CD8-positive, alpha-beta T cell (primary cell): ENCODE measurements at regions of chr12 and their contacts with region 1.

Region 1: DNA sequence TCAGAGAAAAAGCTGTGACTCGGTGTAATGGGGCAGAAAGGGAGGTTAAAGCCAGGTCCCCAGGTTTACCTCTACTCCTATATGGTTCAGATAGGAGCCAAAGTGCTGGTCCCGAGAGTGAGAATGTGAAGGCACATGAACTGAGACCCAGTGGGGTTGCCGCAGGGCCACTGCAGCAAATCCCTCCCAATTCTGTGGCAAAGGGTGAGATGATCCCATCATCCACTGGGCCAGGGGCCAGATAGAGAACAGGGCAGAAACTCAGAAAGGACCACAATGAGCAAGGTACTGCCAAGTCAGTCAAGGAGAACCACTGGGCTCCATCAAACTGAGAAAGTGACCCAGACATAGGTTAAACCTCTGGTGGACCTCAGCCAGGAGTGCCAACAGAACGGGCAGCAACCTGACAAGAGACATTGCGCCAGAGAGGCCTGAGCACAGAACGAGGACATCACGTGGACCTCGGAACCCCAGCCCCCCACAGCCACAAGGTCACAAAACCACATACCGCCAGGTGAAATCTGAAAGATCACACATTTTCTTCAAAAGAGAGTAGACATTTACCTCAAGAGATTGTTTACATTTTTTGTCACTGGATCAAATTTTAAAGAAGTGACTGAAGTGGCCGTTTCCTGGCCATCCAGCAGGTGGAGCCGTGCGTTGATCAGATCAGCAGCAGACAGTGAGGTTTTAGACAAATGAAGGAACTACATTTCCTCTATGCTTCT is 20.5 kb upstream of the ITPR2 start:
- DNase-seq: peak; percentile 55 to 83 (median 69)
- ATAC-seq: peak; percentile 98
- H3K4me3 ChIP-seq: no peak overlapping the region
- H3K4me3 Mint-ChIP-seq: no peak overlapping the region
- H3K27ac ChIP-seq: no peak overlapping the region
- H3K27ac Mint-ChIP-seq: peak overlapping the region; percentile 33
- H3K4me1 ChIP-seq: peaks cover 6% of the 10 kb centered on the region
- H3K4me1 Mint-ChIP-seq: no peaks in the 10 kb centered on the region
- H3K27me3 ChIP-seq: no peaks in the 10 kb centered on the region
- H3K27me3 Mint-ChIP-seq: peaks cover 4% of the 10 kb centered on the region
- CTCF ChIP-seq: peak; percentile 92

Region 2: GRCh38 chr12:27142101-27142721 is 288.7 kb after region 1 on chr12:
- CTCF ChIA-PET with region 1: interaction called, 3 read pairs
- POLR2A ChIA-PET with region 1: no interaction called
- intact Hi-C with region 1: loop called (anchors 2 kb)
- DNase-seq: peak in 7 of 9 experiments; percentile 9 to 73 (median 28)
- ATAC-seq: peak; percentile 51
- H3K4me3 ChIP-seq: no peak overlapping the region
- H3K4me3 Mint-ChIP-seq: no peak overlapping the region
- H3K27ac ChIP-seq: no peak overlapping the region
- H3K27ac Mint-ChIP-seq: no peak overlapping the region
- H3K4me1 ChIP-seq: no peaks in the 10 kb centered on the region
- H3K4me1 Mint-ChIP-seq: peaks cover 6% of the 10 kb centered on the region
- H3K27me3 ChIP-seq: no peaks in the 10 kb centered on the region
- H3K27me3 Mint-ChIP-seq: no peaks in the 10 kb centered on the region
- CTCF ChIP-seq: peak; percentile 81

Region 3: DNA sequence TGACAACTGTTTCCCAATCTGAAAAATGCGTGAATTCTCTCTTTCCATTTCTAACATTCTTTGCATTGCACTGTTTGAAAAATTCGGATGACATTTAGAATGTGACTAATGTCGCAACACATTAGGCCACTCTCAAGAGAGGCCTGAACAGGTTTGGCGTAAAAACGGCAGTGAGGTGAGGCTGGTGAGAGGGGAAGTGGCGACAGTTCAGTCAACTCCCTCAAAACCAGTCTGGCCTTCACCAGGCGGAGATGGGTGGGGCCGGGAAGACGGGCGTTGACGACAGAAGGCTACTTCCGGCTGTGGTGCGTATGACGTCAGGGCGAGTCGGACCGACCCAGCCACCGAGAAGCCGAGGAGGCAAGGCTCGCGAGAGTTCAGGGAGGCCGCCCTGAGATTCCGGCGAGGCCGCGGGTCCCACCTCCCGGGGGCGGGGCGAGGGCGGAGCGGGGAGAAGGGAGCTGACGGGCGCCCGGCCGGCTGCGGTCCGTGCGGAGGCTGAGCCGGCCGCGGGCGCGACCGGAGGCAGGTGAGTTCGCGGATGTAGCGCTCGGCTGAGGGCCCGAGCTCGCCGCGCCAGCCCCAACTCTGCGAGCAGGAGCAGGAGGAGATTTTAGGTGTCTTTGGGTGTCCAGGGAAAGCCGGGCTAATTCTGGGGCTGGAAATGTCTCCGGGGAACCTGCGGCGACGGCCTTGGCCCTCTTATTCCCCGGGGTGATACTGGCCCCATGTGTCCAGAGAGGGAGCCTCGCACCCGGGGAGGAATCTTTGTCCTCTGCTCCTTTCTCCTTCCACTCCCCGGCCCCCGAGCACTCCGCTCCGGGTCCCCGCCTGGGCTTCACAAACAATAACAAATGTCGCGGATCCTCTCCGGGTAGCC is 390.6 kb after region 1 on chr12 and contains the start of gene STK38L:
- CTCF ChIA-PET with region 1: no interaction called
- POLR2A ChIA-PET with region 1: no interaction called
- intact Hi-C with region 1: loop called in 1 of 2 experiments (anchors 1 kb)
- DNase-seq: peak; percentile 90 to 99 (median 98)
- ATAC-seq: peak; percentile 95
- H3K4me3 ChIP-seq: peak within 1 kb of the TSS; percentile 84 to 89
- H3K4me3 Mint-ChIP-seq: peak within 1 kb of the TSS; percentile 96
- H3K27ac ChIP-seq: peak within 1 kb of the TSS; percentile 76
- H3K27ac Mint-ChIP-seq: peak within 1 kb of the TSS; percentile 96
- H3K4me1 ChIP-seq: peaks cover 14% of the 10 kb centered on the region
- H3K4me1 Mint-ChIP-seq: peaks cover 52% of the 10 kb centered on the region
- H3K27me3 ChIP-seq: no peaks in the 10 kb centered on the region
- H3K27me3 Mint-ChIP-seq: no peaks in the 10 kb centered on the region
- CTCF ChIP-seq: no peak
- total RNA-seq, gene STK38L: 27.0 to 28.6 TPM

Region 4: GRCh38 chr12:27305673-27306456 is 452.4 kb after region 1 on chr12:
- CTCF ChIA-PET with region 1: interaction called, 14 read pairs
- POLR2A ChIA-PET with region 1: no interaction called
- intact Hi-C with region 1: loop called (anchors 1 kb)
- DNase-seq: peak in 2 of 9 experiments; percentile 46 to 62
- ATAC-seq: peak; percentile 34
- H3K4me3 ChIP-seq: no peak overlapping the region
- H3K4me3 Mint-ChIP-seq: no peak overlapping the region
- H3K27ac ChIP-seq: no peak overlapping the region
- H3K27ac Mint-ChIP-seq: no peak overlapping the region
- H3K4me1 ChIP-seq: no peaks in the 10 kb centered on the region
- H3K4me1 Mint-ChIP-seq: no peaks in the 10 kb centered on the region
- H3K27me3 ChIP-seq: no peaks in the 10 kb centered on the region
- H3K27me3 Mint-ChIP-seq: no peaks in the 10 kb centered on the region
- CTCF ChIP-seq: peak; percentile 89

Region 5: DNA sequence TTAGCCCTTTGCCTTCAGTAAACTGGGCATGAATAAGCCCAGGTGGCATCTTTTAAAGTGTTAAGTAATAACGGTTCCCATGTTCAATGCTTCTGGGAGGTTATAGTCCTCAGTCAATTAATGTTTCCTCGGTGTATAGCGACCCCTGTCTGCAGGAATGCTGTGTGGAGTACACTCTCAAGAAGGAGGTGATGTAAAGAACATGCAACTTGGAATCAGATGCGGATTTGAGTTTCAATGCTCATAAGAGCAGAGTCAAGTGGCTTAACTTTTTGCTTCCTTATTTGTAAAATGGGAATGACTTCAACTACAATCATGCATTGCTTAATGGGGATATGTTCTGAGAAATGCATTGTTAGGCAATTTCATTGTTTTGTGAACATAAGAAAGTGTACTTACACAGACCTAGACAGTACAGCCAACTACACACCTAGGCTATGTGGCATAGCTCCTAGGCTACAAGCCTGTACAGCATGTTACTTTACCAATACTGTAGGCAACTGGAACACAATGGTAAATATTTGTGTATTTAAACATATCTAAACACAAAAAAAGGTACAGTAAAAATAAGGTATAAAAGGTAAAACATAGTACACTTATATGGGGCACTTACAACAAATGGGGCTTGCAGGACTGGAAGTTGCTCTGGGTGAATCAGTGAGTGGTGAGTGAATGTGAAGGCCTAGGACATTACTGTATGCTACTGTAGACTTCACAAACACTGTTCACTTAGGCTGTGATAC is 850.4 kb after region 1 on chr12:
- CTCF ChIA-PET with region 1: no interaction called
- POLR2A ChIA-PET with region 1: no interaction called
- intact Hi-C with region 1: loop called in 1 of 2 experiments (anchors 5 kb)
- DNase-seq: peak; percentile 32 to 77 (median 64)
- ATAC-seq: peak; percentile 98
- H3K4me3 ChIP-seq: no peak overlapping the region
- H3K4me3 Mint-ChIP-seq: no peak overlapping the region
- H3K27ac ChIP-seq: no peak overlapping the region
- H3K27ac Mint-ChIP-seq: no peak overlapping the region
- H3K4me1 ChIP-seq: no peaks in the 10 kb centered on the region
- H3K4me1 Mint-ChIP-seq: no peaks in the 10 kb centered on the region
- H3K27me3 ChIP-seq: no peaks in the 10 kb centered on the region
- H3K27me3 Mint-ChIP-seq: peaks cover 6% of the 10 kb centered on the region
- CTCF ChIP-seq: peak; percentile 74